ENCODE measurements at regions of chr18 and their contacts with region 1.

Region 1: DNA sequence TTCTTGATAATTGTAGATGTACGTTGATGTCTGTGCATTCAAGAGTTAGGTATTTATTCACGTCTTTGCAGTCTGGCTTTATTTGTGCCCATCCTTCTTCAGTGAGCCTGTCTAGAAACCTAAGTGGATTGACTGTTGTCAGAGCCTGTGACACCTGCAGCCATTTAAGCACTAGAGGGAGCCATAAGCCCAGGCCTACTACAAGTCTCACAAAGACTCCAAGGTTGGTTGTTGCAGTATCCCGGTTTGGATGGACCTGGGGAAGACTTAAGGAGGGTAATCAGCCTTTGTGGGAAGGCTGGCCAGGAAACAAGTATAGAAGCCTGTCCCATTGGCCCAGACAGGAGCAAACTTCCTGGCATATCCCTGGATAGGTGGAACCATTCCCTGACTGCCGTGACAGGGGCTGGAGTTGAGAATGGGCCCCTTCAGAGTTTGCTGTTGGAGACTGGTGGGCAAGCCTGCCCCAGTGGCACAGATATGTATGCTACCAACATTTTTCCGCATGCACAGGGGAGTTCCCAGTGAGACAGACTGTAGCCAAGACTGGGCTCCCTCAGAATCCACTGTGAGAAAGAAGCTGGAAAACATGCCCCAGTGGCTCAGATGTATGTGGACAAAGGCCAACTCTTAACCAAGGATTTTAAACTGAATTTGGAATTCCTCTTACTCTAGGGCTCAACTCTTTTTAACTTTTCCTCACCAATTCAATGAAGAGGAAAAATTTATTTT is 9.3 kb upstream of the LRRC30 start:
- DNase-seq: peak; percentile 80
- H3K4me3 Mint-ChIP-seq: no peak overlapping the region
- H3K27ac Mint-ChIP-seq: no peak overlapping the region
- H3K4me1 Mint-ChIP-seq: no peaks in the 10 kb centered on the region
- H3K27me3 Mint-ChIP-seq: peaks cover 25% of the 10 kb centered on the region
- CTCF ChIP-seq: peak; percentile 83

Region 2: GRCh38 chr18:6855767-6856166 is 365.8 kb before region 1 on chr18:
- CTCF ChIA-PET with region 1: no interaction called
- POLR2A ChIA-PET with region 1: no interaction called
- intact Hi-C with region 1: no loop called
- DNase-seq: no peak
- H3K4me3 Mint-ChIP-seq: no peak overlapping the region
- H3K27ac Mint-ChIP-seq: no peak overlapping the region
- H3K4me1 Mint-ChIP-seq: no peaks in the 10 kb centered on the region
- H3K27me3 Mint-ChIP-seq: no peaks in the 10 kb centered on the region
- CTCF ChIP-seq: no peak

Region 3: DNA sequence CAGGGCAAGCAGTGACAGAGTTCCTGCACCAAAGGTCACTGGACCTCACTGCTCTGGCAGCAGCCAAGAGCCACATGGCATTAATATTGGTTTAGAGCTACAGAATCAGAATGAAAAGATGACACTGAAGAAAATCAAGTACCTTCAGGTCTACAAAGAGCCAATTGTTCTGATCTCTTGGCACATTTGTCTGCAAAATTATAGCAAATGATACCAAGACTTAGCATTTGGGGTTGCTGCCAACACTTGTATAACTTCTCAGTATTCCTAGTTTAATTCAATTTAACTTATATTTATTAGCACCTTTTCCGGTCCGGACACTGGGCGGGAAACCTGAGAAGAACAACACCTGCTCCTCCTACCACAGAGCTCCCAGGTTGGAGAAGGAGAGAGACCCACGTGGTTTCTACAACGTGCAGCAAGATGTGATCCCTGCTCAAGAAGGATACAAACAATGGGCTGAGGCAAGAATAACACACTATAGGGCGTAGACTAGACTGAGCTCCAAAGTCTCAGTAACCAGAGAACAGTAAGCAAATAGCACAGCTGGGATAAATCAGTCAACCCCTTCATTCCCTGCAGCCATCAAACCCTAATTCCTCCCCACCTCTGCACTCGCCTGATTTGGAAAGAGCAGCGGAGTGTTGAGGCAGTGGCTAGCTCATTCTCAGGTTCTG is 11.7 kb after region 1 on chr18:
- CTCF ChIA-PET with region 1: interaction called, 12 read pairs
- POLR2A ChIA-PET with region 1: no interaction called
- intact Hi-C with region 1: no loop called
- DNase-seq: no peak
- H3K4me3 Mint-ChIP-seq: no peak overlapping the region
- H3K27ac Mint-ChIP-seq: no peak overlapping the region
- H3K4me1 Mint-ChIP-seq: no peaks in the 10 kb centered on the region
- H3K27me3 Mint-ChIP-seq: peaks cover 57% of the 10 kb centered on the region
- CTCF ChIP-seq: no peak